ENCODE measurements at regions of chr19 and their contacts with region 1.

Region 1: GRCh38 chr19:18542936-18543815 is at the start of gene FKBP8:
- DNase-seq: peak; percentile 91
- H3K4me3 Mint-ChIP-seq: peak within 1 kb of the TSS; percentile 95
- H3K27ac Mint-ChIP-seq: peak within 1 kb of the TSS; percentile 99
- H3K4me1 Mint-ChIP-seq: peaks cover 14% of the 10 kb centered on the region
- H3K27me3 Mint-ChIP-seq: no peaks in the 10 kb centered on the region
- total RNA-seq, gene FKBP8: 196 and 201 TPM in 2 replicates

Region 2: DNA sequence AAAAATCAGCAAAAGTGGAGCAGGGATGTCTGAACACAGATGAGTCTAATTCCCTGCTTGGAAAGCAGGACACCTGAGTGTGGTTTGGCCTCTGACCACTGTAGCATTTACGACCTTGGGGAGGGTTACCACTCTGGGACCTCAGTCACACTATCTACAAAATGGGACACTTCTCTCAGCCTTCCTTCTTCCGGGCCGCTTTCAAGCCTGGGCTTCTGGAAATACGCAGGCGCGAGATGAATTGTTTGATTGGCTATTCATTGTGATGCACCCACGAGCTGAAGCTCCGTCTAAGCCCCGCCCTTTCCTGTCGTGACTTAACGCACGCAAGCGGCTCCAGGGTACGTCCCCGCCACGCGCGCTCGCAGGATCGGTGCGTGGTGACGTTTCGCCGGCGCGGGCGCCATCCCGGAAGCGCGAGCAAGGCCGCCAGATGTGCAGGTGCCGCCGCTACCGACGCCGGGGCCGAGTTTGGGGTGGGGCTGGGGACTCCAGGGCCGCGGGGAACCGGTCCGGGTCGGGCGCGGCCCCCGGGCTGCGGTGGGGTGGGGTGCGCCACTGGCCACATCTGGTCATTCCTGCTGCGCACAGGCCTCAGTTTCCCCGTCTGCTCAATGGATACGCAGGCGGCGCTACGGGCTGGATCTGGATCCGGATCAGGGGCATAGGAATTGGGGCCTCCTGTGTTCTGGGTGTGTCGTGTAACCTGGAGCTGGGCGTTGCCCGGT is 14.5 kb after region 1 on chr19 and contains the start of gene KXD1:
- intact Hi-C with region 1: loop called (anchors 1 kb)
- DNase-seq: peak; percentile 99
- H3K4me3 Mint-ChIP-seq: peak within 1 kb of the TSS; percentile 93
- H3K27ac Mint-ChIP-seq: peak within 1 kb of the TSS; percentile 96
- H3K4me1 Mint-ChIP-seq: peaks cover 16% of the 10 kb centered on the region
- H3K27me3 Mint-ChIP-seq: no peaks in the 10 kb centered on the region
- total RNA-seq, gene KXD1: 132 and 141 TPM in 2 replicates

Region 3: DNA sequence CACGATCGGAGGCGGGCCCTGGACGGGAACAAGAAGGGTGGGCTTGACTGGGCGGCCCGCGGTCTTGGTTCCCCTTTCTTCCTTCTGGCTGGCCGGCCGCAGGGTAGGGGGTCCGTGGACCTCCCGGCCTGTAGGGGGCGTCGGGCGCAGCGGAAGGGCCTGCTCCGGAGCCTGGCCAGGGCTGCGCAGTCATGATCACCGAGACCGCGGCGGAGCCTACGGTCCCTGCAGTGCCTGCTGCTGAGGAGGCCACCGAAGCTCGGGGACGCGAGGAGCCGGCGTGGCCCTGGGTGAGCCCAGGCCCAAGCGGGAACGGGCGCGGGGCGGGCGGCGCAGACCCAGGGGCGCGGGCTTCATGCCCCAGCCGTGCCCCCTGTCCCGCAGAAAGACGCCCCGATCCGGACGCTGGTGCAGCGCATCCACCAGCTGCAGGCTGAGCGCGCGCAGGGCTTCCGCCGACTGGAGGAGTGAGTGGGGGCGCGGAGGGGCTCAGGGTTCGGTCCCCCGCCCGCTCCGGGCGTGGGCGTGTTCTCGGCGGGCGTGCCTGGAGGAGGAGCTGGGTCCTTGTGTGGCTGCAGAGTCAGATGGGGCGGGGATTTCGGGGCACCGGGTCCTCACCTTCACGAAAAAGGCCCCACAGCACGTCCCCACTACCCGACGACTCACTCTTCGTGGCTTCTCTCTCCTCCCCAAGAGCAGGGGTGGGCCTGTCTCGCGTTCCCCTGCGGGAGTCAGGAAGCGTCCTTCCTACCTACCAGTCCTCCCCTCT is 45.6 kb after region 1 on chr19 and contains the start of gene REX1BD:
- intact Hi-C with region 1: loop called (anchors 2 kb)
- DNase-seq: peak; percentile 86
- H3K4me3 Mint-ChIP-seq: peak within 1 kb of the TSS; percentile 84
- H3K27ac Mint-ChIP-seq: peak within 1 kb of the TSS; percentile 93
- H3K4me1 Mint-ChIP-seq: peaks cover 31% of the 10 kb centered on the region
- H3K27me3 Mint-ChIP-seq: no peaks in the 10 kb centered on the region
- total RNA-seq, gene REX1BD: 122 and 132 TPM in 2 replicates